Sciatic nerve (tissue), 2 donors: ENCODE measurements at regions of chr12 and their contacts with region 1.

Region 1: DNA sequence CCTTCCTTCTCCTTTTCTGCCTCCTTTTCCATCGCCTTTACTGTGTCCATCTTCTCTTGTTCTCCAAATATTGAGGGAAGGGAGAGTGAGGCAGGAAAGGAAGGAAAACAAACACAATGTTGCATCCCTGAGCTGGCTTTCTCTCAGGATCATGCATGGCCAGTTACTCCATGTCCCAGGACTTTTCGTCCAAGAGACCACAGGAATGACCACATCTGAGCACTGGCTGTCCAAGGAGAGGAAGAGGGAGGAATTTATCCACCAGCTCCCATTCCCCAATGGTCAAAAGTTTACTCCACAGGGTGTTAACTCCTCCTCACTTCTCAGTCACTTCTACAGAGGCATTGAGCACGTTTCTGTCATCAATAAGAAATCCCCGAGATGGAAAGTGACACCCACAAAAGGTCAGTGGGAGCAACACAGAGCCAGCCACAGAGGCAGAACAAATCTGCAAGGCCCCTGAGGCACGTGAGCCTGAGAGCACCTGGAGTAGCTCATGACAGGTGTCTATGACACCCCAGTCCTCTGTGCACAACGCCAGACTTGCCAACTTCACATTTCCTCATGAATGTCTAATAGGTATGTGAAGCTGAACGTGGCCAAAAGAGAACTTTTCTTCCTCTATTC is 177.3 kb upstream of the NUDT4 start:
- DNase-seq: no peak
- ATAC-seq: peak; percentile 29

Region 2: DNA sequence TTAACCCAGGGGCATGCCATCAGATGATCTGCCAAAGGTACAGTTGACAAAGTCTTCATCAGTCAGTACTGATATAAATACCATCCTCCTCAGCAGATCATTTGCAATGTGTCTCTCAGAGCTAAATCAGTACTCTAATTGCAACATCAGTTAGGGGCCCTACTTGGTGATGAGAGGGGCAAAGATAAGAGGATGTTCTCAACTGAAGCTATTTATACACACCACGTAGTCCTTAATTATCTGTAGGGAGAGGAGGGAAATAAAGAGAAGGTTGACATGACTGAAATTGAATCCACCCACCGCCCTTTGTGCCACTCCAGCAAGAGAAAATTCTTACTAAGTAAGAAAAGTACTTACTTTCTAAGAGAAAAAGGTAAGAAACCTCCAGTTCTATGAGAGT is 19.5 kb after region 1 on chr12:
- intact Hi-C with region 1: loop called (anchors 1 kb)
- DNase-seq: no peak
- ATAC-seq: no peak